WTC11 (cell line): ENCODE measurements at regions of chr6 and their contacts with region 1.

Region 1: DNA sequence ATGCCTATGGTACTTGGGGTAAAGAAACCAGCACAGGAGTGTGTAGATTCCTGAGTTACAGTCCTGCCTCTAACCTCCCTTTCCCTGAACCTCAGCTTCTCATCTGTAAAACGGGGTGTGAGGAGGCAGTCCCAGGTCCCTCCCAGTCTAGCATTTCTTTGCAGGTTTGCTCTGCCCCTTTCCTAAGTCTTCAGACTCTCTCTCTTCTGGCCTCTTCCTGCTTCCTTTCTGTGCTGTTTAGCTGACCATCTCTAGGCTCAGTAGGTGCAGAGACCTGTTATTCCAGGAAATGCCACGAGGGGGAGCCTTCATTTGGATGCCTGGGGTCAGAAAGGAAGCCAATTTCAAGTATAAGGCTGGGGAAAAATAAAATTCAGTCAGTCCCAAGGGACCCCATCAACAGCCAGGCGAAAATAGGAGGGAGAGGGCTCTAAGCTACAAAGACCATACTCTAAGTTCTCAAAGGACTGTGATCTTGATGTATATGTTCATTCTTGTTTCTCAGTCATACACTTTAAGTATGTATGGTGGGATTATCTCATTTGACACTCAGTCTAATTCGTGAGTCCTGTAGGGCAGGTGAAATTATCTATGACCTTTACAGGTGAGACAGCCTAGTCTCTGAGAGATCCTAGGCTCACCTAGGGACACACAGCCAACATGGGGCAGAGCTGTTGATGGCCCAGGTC is 89.1 kb downstream of the NCR2 start:
- DNase-seq: peak; percentile 91
- ATAC-seq: peak; percentile 33
- H3K4me3 Mint-ChIP-seq: no peak overlapping the region
- H3K27ac Mint-ChIP-seq: no peak overlapping the region
- H3K4me1 Mint-ChIP-seq: peaks cover 9% of the 10 kb centered on the region
- H3K27me3 Mint-ChIP-seq: peaks cover 50% of the 10 kb centered on the region
- CTCF ChIP-seq: peak; percentile 80

Region 2: GRCh38 chr6:41367700-41368099 is 56.8 kb before region 1 on chr6:
- CTCF ChIA-PET with region 1: interaction called, 13 read pairs
- POLR2A ChIA-PET with region 1: no interaction called
- DNase-seq: peak; percentile 84
- ATAC-seq: peak; percentile 77
- H3K4me3 Mint-ChIP-seq: no peak overlapping the region
- H3K27ac Mint-ChIP-seq: no peak overlapping the region
- H3K4me1 Mint-ChIP-seq: peaks cover 30% of the 10 kb centered on the region
- H3K27me3 Mint-ChIP-seq: peaks cover 75% of the 10 kb centered on the region
- CTCF ChIP-seq: peak; percentile 58

Region 3: GRCh38 chr6:41406728-41407489 is 17.6 kb before region 1 on chr6:
- CTCF ChIA-PET with region 1: interaction called, 24 read pairs
- POLR2A ChIA-PET with region 1: interaction called, 6 read pairs
- DNase-seq: peak; percentile 55
- ATAC-seq: peak; percentile 49
- H3K4me3 Mint-ChIP-seq: peak overlapping the region; percentile 55
- H3K27ac Mint-ChIP-seq: no peak overlapping the region
- H3K4me1 Mint-ChIP-seq: peaks cover 34% of the 10 kb centered on the region
- H3K27me3 Mint-ChIP-seq: peaks cover 100% of the 10 kb centered on the region
- CTCF ChIP-seq: no peak

Region 4: GRCh38 chr6:41449399-41450245 is 25.1 kb after region 1 on chr6:
- CTCF ChIA-PET with region 1: interaction called, 108 read pairs
- POLR2A ChIA-PET with region 1: no interaction called
- DNase-seq: no peak
- ATAC-seq: no peak
- H3K4me3 Mint-ChIP-seq: no peak overlapping the region
- H3K27ac Mint-ChIP-seq: no peak overlapping the region
- H3K4me1 Mint-ChIP-seq: peaks cover 24% of the 10 kb centered on the region
- H3K27me3 Mint-ChIP-seq: peaks cover 30% of the 10 kb centered on the region
- CTCF ChIP-seq: no peak

Region 5: DNA sequence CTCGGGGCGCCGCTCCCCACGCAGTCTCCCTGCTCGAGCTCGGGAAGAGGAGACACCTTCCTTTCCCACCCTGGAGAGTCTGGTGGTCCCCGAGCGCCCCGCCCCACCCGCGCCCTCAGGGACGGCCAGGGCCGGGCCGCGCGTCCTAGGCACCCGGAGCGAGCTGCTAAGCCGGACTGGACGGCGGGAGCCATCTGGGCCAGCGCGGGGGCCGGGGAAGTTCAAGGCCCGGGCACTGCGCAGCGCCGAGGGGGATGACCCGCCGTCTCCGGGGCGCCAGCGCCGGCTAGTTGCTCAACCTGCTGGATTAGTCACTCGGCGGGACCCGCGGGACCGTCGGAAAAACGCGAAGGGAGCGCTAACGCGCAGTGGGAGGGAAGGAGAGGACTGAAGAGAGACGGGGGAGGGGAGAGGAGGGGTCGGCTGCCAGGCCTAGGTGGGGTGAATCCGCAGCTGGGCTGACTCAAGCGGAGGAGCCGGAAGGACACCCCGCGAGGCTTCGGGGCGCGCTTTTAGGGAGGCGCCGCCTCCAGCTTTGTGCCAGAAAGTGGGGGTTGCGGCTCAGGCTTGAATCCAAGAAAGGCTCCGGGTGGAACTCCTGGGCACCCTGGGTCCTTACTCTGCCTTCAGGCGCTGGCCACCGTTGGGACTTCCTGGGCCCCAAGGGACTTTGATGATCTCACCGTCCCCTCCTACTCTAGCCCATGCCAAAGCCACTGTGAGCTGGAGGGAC is 46.0 kb after region 1 on chr6:
- CTCF ChIA-PET with region 1: interaction called, 17 read pairs
- POLR2A ChIA-PET with region 1: no interaction called
- DNase-seq: peak; percentile 54
- ATAC-seq: peak; percentile 31
- H3K4me3 Mint-ChIP-seq: peak overlapping the region; percentile 70
- H3K27ac Mint-ChIP-seq: no peak overlapping the region
- H3K4me1 Mint-ChIP-seq: peaks cover 47% of the 10 kb centered on the region
- H3K27me3 Mint-ChIP-seq: peaks cover 92% of the 10 kb centered on the region
- CTCF ChIP-seq: no peak

Region 6: GRCh38 chr6:41528591-41528963 is 104.1 kb after region 1 on chr6:
- CTCF ChIA-PET with region 1: no interaction called
- POLR2A ChIA-PET with region 1: no interaction called
- DNase-seq: no peak
- ATAC-seq: no peak
- H3K4me3 Mint-ChIP-seq: no peak overlapping the region
- H3K27ac Mint-ChIP-seq: no peak overlapping the region
- H3K4me1 Mint-ChIP-seq: peaks cover 44% of the 10 kb centered on the region
- H3K27me3 Mint-ChIP-seq: peaks cover 35% of the 10 kb centered on the region
- CTCF ChIP-seq: no peak

Region 7: DNA sequence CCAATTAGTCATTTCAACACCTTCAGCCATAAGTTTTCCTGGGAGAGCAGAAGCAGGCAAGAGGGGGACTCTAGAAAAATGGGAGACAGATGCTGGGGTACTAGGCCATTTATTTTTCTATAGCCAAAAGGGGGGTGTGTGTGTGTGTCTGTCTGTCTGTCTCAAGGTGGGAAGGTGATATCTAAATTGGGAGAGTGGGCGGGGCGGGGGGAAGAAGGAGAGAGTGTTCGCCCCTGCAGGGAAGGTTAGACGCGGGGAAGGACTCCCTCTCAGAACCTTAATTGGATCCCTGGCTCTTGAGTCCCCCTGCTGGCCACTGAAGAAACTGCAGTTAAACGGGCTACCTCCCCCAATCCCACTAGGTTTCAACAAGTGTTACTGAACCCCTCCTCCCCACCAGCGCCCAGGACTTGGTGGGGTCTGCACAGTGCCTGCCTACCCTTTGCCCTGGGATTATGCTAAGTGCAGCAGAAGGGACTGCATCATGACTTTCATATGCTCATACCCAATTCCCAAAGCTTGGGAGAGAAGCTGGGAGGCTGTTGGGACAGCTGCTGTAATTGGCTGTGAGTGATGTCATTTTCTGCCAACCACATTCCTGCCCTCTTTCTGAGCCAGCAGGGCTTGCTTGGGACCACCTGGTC is 167.5 kb after region 1 on chr6:
- CTCF ChIA-PET with region 1: interaction called, 27 read pairs
- POLR2A ChIA-PET with region 1: no interaction called
- DNase-seq: peak; percentile 90
- ATAC-seq: peak; percentile 78
- H3K4me3 Mint-ChIP-seq: no peak overlapping the region
- H3K27ac Mint-ChIP-seq: no peak overlapping the region
- H3K4me1 Mint-ChIP-seq: peaks cover 41% of the 10 kb centered on the region
- H3K27me3 Mint-ChIP-seq: peaks cover 7% of the 10 kb centered on the region; the same call in 1 of the 2 replicates
- CTCF ChIP-seq: peak; percentile 98

Region 8: GRCh38 chr6:41647061-41647511 is 222.6 kb after region 1 on chr6:
- CTCF ChIA-PET with region 1: no interaction called
- POLR2A ChIA-PET with region 1: no interaction called
- DNase-seq: no peak
- ATAC-seq: no peak
- H3K4me3 Mint-ChIP-seq: no peak overlapping the region
- H3K27ac Mint-ChIP-seq: no peak overlapping the region
- H3K4me1 Mint-ChIP-seq: peaks cover 42% of the 10 kb centered on the region
- H3K27me3 Mint-ChIP-seq: peaks cover 3% of the 10 kb centered on the region; the same call in 1 of the 2 replicates
- CTCF ChIP-seq: no peak